Psoas muscle (tissue), 8 donors: ENCODE measurements at regions of chr19 and their contacts with region 1.

Region 1: DNA sequence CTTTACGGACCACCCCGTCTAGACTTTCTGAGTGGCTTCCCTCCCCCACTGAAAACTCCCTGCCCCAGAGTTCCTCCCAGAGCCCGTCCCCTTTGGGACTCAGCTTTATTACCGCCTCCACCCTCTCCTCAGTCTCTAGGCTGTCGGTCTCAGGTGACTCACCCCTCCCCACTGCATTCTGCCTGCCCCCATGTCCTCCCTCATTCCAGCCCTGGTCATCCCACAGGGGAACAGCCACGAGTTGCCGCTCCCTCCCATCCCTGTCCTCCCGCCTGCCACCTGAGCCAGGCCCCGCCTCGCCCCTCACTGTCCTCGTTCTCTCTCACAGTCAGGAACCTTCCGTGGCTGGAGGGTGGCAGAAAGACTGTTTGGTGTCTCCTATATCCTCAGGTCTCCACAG is 57.3 kb downstream of the SMARCA4 start:
- DNase-seq: no peak
- ATAC-seq: peak in 1 of 4 donors; percentile 19
- H3K4me3 ChIP-seq: no peak overlapping the region
- H3K27ac ChIP-seq: no peak overlapping the region
- H3K4me1 ChIP-seq: no peaks in the 10 kb centered on the region
- H3K27me3 ChIP-seq: no peaks in the 10 kb centered on the region
- CTCF ChIP-seq: no peak

Region 2: GRCh38 chr19:10946964-10947657 is 71.1 kb before region 1 on chr19:
- intact Hi-C with region 1: loop called in 1 of 2 experiments (anchors 10 kb)
- DNase-seq: no peak
- ATAC-seq: no peak
- H3K4me3 ChIP-seq: no peak overlapping the region
- H3K27ac ChIP-seq: no peak overlapping the region
- H3K4me1 ChIP-seq: peaks cover 7% of the 10 kb centered on the region
- H3K27me3 ChIP-seq: no peaks in the 10 kb centered on the region
- CTCF ChIP-seq: no peak